Gastrocnemius medialis (tissue), 4 donors: ENCODE measurements at regions of chr20 and their contacts with region 1.

Region 1: DNA sequence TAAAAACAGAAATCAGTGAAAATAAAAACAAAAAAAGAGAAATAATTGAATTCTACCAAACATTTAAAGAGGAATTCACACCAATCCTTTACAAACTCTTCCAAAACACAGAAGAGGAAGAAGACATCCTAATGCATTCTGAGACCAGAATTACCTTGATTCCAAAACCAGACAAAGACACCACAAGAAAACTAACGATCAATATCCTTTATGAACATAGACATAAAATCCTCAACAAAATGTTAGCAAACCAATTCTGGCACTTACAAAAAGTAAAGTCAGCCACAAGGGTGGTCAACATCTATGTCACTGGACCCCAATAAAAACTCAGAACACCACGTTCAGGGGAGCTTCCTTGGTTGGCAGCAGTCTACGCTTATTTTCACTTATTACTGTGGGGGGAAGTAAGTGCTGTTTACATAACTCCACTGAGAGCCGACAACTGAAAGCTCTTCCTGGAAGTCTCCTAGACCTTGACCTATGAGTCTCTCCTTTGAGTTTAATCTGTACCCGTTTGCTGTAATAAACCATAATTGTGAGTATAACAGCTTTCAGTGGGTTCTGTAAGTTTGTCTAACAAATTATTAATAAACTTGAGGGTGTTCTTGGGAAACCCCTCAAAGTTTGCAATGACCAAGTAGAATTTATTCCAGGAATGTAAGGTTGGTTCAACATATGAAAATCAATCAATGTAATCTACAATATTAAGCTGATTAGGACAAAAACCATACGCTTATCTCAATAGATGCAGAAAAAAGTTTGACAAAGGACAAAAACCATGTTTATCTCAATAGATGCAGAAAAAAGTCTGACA is 24.5 kb downstream of the GZF1 start:
- DNase-seq: no peak
- ATAC-seq: no peak
- H3K4me3 ChIP-seq: no peak overlapping the region
- H3K27ac ChIP-seq: no peak overlapping the region
- H3K4me1 ChIP-seq: peaks cover 3 to 24% of the 10 kb centered on the region in 2 donors
- H3K27me3 ChIP-seq: no peaks in the 10 kb centered on the region
- CTCF ChIP-seq: no peak
- POLR2A ChIP-seq: no peak

Region 2: GRCh38 chr20:23366384-23366783 is 20.1 kb before region 1 on chr20:
- in situ Hi-C with region 1: no loop called
- intact Hi-C with region 1: loop called (anchors 2 kb)
- DNase-seq: no peak
- ATAC-seq: no peak
- H3K4me3 ChIP-seq: no peak overlapping the region
- H3K27ac ChIP-seq: peak overlapping the region; percentile 23 to 52 (median 36)
- H3K4me1 ChIP-seq: peaks cover 44% of the 10 kb centered on the region in 2 donors
- H3K27me3 ChIP-seq: no peaks in the 10 kb centered on the region
- CTCF ChIP-seq: no peak
- POLR2A ChIP-seq: no peak